PC-9 (cell line): ENCODE measurements at regions of chr19 and their contacts with region 1.

Region 1: GRCh38 chr19:46788262-46788967 is at the start of gene SLC1A5:
- DNase-seq: peak; percentile 94 to 98
- H3K4me3 ChIP-seq: peak within 1 kb of the TSS; percentile 98
- H3K27ac ChIP-seq: peak within 1 kb of the TSS; percentile 92
- H3K4me1 ChIP-seq: peaks cover 40% of the 10 kb centered on the region
- H3K27me3 ChIP-seq: no peaks in the 10 kb centered on the region
- CTCF ChIP-seq: no peak
- total RNA-seq, gene SLC1A5: 218 and 264 TPM in 2 replicates

Region 2: DNA sequence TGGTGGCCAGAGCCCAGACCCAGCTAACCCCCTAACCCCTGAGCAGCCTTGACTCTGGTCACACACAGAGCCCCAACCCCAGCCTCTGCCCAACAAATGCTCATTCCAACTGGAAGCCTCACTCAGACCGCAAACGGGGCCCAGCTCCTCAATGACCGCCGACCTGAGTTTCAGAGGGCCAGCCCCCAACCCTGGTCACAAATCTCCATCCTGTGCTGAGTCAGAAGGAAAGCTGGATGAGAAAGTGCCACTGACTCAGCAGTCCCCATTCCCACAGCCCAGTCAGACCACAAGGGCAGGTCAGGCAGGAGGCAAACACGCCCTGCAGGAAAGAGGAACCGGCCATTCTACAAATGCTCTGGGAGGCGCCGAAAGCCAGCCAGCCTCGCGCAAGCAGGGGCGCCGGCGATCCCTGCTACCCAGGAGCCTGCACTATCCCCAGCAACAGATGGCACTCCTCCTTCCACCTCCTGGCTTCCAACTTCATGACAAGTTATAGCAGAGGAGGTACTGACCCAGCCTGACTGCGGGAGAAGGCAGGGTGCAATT is 57.4 kb before region 1 on chr19:
- CTCF ChIA-PET with region 1: interaction called, 3 read pairs
- POLR2A ChIA-PET with region 1: interaction called, 3 read pairs
- intact Hi-C with region 1: loop called (anchors 5 kb)
- DNase-seq: peak; percentile 92 to 96
- H3K4me3 ChIP-seq: peak overlapping the region; percentile 2; the same call in 1 of the 2 replicates
- H3K27ac ChIP-seq: peak overlapping the region; percentile 83
- H3K4me1 ChIP-seq: peaks cover 54% of the 10 kb centered on the region
- H3K27me3 ChIP-seq: no peaks in the 10 kb centered on the region
- CTCF ChIP-seq: no peak

Region 3: DNA sequence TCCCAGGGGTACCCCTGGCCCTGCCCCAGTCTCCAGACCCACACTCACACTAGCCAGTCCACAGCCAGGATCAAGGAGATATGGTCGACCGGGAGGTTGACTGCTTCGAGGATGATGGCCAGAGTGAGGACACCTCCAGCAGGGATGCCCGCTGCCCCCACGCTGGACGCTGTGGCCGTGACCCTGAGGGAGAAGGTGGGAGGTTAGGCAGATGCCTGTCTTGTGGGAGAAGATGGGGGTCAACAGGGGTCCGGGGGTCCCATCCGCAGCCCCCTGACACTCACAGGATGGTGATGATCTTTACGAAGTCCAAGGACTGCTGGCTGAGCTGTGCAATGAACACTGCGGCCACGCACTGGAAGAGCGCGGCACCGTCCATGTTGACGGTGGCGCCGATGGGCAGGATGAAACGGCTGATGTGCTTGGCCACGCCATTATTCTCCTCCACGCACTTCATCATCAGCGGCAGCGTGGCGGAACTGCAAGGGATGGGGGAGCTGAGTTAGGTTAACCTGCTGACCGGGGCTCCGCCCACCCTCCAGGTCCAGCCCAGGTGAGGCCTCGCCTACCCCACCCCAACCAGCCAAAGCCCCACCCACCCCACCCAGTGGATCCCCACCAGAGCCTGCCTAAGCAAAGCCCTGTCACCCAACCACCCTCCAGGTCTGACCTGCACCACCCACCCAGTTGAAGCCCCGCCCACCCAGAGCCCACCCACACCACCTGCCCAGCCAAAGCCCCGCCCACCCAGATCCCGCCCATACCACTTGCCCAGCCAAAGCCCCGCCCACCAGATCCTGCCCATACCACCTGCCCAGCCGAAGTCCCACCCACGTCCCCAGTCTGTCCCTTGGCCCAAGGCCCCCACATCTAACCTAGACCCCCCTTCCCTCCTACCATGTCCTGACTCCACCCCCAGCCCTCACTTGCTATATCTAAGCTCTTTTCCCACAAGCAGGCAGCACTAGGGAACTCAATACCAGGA is 11.2 kb before region 1 on chr19:
- CTCF ChIA-PET with region 1: no interaction called
- POLR2A ChIA-PET with region 1: no interaction called
- intact Hi-C with region 1: no loop called
- DNase-seq: no peak
- H3K4me3 ChIP-seq: no peak overlapping the region
- H3K27ac ChIP-seq: no peak overlapping the region
- H3K4me1 ChIP-seq: peaks cover 19% of the 10 kb centered on the region
- H3K27me3 ChIP-seq: no peaks in the 10 kb centered on the region
- CTCF ChIP-seq: no peak

Region 4: GRCh38 chr19:46825525-46825971 is 37.1 kb after region 1 on chr19:
- CTCF ChIA-PET with region 1: interaction called, 12 read pairs
- POLR2A ChIA-PET with region 1: interaction called, 7 read pairs
- intact Hi-C with region 1: loop called (anchors 1 kb)
- DNase-seq: peak in 1 of 2 experiments; percentile 93
- H3K4me3 ChIP-seq: no peak overlapping the region; the same call in 1 of the 2 replicates
- H3K27ac ChIP-seq: peak overlapping the region; percentile 49
- H3K4me1 ChIP-seq: peaks cover 58% of the 10 kb centered on the region
- H3K27me3 ChIP-seq: no peaks in the 10 kb centered on the region
- CTCF ChIP-seq: 0 out of 2 replicates have a peak, but pooled peaks have one; percentile 31

Region 5: DNA sequence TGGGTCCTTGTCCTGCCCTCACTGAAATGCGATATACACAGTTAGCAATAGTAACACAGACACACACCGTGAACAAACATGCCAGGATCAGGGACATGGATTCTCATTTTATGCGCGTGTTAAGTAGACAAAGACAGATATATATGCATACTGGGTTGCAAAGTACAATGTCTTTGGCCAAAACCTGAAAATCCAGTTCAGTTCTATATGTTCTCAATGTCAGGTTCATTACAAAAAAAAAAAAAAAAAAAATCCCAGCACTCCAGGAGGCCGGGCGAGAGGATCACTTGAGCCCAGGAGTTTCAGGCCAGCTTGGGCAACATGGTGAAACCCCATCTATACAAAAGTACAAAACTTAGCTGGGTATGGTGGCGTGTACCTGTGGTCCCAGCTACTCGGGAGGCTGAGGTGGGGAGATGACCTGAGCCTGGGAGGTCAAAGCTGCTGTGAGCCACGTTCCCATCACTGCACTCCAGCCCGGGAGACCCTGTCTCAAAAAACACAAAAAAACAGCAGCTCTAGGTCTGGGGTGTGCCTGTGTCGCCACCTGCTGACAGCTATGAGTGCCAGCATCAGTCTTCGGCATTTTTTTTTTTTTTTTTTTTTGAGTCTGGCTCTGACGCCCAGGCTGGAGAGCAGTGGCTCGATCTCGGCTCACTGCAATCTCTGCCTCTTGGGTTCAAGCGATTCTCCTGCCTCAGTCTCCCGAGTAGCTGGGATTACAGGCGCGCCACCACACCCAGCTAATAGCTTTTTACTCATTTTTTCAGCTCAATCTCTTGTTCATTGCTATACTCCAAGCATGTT is 51.9 kb after region 1 on chr19:
- CTCF ChIA-PET with region 1: interaction called, 4 read pairs
- POLR2A ChIA-PET with region 1: interaction called, 28 read pairs
- intact Hi-C with region 1: loop called (anchors 2 kb)
- DNase-seq: peak; percentile 48 to 64
- H3K4me3 ChIP-seq: no peak overlapping the region
- H3K27ac ChIP-seq: peak overlapping the region; percentile 44
- H3K4me1 ChIP-seq: peaks cover 19% of the 10 kb centered on the region
- H3K27me3 ChIP-seq: no peaks in the 10 kb centered on the region
- CTCF ChIP-seq: peak; percentile 98

Region 6: DNA sequence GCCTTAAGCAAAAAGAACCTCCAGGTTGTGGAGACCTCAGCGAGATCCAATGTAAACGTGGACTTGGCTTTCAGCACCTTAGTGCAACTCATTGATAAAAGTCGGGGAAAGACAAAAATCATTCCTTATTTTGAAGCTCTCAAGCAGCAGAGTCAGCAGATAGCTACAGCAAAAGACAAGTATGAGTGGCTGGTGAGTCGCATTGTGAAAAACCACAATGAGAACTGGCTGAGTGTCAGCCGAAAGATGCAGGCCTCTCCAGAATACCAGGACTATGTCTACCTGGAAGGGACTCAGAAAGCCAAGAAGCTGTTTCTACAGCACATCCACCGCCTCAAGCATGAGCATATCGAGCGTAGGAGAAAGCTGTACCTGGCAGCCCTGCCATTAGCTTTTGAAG is 130.9 kb after region 1 on chr19:
- CTCF ChIA-PET with region 1: no interaction called
- POLR2A ChIA-PET with region 1: interaction called, 11 read pairs
- intact Hi-C with region 1: no loop called
- DNase-seq: peak in 1 of 2 experiments; percentile 46
- H3K4me3 ChIP-seq: no peak overlapping the region
- H3K27ac ChIP-seq: no peak overlapping the region
- H3K4me1 ChIP-seq: peaks cover 61% of the 10 kb centered on the region
- H3K27me3 ChIP-seq: no peaks in the 10 kb centered on the region
- CTCF ChIP-seq: no peak

Region 7: DNA sequence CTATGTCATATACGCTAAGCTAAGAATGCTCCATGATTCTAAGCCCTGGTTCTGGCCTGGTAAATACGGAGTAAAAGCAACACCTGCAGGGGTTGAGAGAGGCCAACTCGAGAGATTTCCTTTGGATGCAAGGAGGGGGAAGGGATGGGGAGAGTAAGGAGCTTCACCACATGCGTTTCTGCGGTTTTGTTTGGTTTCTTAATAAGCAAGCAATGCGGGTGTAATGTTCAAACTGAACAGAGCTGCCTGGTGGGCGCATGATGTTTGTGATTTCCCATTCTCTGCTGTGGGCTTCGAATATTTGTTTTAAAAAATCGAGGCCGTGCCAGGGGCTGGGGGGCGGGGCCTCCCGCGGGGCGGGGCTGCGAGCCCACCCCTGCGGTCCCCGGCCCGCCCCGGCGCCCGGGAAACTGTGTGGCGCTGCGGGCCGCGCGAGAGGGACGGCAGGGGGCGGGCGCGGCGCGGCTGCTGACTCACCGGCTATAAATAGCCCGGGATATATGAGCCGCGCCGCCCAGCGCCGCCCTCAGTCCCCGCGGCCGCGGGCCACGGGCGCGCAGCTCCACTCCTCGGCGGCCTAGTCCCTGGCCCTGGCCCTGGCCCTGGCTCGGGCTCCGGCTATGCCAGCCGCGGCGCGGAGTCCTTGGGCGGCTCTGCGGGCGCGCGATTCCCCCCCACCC is 437.5 kb after region 1 on chr19:
- CTCF ChIA-PET with region 1: no interaction called
- POLR2A ChIA-PET with region 1: interaction called, 16 read pairs
- intact Hi-C with region 1: no loop called
- DNase-seq: peak; percentile 64 to 88
- H3K4me3 ChIP-seq: peak overlapping the region; percentile 99
- H3K27ac ChIP-seq: peak overlapping the region; percentile 57
- H3K4me1 ChIP-seq: peaks cover 38% of the 10 kb centered on the region
- H3K27me3 ChIP-seq: no peaks in the 10 kb centered on the region
- CTCF ChIP-seq: no peak